ENCODE measurements at regions of chr5 and their contacts with region 1.

Region 1: DNA sequence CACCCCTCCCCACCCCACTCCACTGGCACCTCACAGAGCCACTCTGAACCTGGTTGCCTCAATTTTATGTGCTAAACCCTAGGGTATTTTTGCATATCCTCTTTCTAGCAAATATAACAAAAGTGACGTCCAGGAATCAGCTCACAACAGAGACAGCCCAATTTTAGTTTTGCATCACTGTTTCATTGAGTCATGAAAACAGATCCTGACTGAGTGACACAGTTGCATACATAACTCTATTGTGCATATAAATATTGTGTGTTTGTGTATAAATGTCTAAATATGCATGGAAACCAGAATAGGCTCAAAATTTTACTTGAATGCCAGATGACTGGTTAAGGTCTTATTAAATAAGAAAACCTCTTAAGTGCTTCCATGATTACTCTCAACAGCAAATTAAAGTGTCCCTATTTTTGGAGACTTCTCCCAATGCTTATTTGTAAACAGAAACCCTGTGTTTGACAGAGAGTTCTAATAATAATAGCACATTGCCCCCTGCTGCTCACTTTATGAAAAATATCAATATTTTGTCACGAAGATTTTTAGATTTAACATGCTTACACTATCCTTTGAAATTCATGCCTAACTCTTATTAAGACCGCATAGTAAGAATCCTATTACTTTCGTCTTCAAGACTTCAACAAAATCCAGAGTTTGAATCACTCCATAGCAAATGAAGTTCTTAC is 75.5 kb upstream of the PRRC1 start:
- DNase-seq: no peak
- H3K4me3 Mint-ChIP-seq: no peak overlapping the region
- H3K27ac Mint-ChIP-seq: no peak overlapping the region
- H3K4me1 Mint-ChIP-seq: peaks cover 16% of the 10 kb centered on the region
- H3K27me3 Mint-ChIP-seq: no peaks in the 10 kb centered on the region
- CTCF ChIP-seq: peak; percentile 38

Region 2: DNA sequence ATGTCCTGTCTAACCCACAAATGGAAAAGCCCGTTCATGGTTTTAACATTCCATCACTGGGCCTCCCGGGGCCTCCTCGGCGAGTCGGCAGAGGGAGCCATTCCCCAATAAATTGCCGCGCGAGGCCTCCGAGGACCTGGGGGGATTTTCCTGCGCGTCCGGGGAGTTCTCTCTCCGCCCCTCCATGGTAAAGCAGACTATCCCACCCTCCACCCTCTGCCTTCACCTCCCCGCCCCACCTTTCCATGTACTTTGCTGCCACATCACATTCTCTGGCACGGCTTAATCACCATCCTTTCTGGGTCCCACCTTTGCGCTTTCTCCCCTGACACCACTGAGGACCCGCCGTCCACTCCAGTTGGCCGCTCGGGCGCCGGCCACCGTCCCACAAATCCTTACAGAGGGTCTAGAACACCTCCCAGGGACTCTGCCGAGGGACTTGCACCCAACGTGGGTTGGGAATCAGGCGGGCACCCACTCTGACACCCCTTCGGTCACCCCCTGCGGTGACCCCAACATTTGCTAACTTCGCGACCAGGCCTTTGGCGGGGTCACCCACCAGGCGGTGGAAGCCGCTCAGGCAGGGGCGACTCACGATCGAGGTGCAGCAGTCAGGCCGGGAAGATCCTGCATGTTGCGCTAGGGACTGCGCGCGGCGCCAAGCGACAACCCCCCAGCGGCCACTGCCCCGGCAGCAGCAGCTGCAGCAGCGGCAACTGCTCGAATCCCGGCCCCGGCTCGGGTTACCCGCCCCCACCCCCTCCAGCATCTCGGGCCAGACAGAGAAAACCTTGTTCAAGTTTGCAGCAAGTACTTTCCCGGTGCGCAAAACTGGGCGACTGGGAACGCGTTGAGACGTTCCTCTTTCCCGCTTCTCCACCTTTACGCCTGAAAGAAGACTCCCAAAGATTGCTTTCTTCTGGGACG is 151.7 kb before region 1 on chr5 and contains the start of gene MEGF10:
- CTCF ChIA-PET with region 1: no interaction called
- intact Hi-C with region 1: loop called (anchors 1 kb)
- DNase-seq: peak; percentile 77
- H3K4me3 Mint-ChIP-seq: peak within 1 kb of the TSS; percentile 79
- H3K27ac Mint-ChIP-seq: no peak within 1 kb of the TSS
- H3K4me1 Mint-ChIP-seq: peaks cover 10% of the 10 kb centered on the region
- H3K27me3 Mint-ChIP-seq: peaks cover 80% of the 10 kb centered on the region
- CTCF ChIP-seq: peak; percentile 86
- total RNA-seq, gene MEGF10: 0.56 and 0.71 TPM in 2 replicates

Region 3: DNA sequence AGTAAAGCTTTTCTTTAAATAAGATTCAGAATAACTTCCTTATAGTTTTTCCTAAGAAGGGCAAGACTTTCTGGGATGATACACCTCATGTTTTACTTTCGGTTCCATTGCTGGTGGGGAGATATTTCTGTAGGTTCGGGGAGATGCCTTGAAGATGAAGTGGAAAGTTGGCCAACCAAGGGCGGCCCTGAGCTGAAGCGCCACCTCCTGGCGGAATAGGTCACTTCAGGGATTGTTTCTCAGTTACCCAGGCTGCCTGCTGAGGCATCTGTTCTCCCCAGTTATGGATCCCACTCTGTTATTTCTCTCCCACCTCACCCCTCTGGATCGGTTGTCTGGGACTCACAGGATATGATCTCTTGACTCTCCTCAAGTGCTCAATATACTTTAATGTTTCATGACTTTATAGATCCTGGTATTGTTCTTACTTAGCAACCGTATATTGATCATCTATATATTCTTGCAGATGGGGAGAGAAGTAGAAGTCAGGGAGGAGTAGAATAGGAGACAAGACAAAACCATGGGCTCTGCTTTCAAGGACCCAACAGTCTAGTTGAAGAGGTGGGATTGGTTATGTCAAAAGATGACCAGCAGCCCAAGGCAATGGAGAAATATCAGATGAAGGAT is 128.0 kb before region 1 on chr5:
- CTCF ChIA-PET with region 1: interaction called, 3 read pairs
- intact Hi-C with region 1: loop called (anchors 1 kb)
- DNase-seq: peak; percentile 82
- H3K4me3 Mint-ChIP-seq: no peak overlapping the region
- H3K27ac Mint-ChIP-seq: no peak overlapping the region
- H3K4me1 Mint-ChIP-seq: no peaks in the 10 kb centered on the region
- H3K27me3 Mint-ChIP-seq: peaks cover 11% of the 10 kb centered on the region
- CTCF ChIP-seq: peak; percentile 83